ENCODE measurements at regions of chr11 and their contacts with region 1.

Region 1: DNA sequence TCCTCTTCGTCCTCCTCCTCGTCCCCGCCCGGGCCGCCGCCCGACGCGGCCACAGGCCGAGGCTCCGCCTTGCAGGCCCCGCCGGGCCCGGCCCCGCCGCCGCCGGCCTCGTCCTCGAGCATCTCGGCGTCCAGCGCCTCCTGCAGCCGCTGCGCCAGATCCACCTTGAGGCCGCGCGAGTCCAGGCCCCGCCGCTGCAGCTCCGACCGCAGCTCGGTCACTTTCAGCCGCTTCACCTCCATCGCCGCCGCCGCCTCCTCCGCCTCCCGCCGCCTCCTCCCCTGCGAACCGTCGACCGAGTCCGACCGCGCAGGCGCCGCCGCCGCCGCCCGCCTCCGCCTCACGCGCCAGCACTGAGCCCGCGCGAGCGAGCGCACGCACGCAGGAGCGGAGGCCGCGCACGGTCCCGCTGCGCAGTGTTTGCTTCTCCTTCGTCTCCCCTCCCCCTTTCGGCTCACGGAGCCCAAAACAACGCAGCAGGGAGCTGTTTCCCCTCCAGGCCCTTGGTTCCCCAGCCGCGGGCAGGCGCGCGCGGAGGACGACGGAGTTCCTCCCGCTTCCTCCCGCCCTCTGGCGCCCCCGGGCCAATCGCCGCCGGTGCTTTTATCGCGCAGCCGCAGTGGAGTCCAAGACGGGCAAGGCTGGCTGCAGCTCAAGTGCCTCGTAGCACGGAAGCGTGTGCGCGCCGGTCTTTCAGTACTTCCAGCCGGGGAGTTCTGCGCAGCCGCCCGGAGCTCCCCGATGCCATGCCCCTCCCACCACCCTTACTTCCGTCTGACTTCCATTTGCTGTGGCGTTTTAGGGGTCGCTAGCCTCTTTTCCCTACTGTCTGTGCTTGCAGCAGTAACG is at the start of gene HNRNPUL2:
- DNase-seq: peak; percentile 81
- H3K4me3 ChIP-seq: peak within 1 kb of the TSS; percentile 72 to 93 (median 77)
- H3K27ac ChIP-seq: peak within 1 kb of the TSS; percentile 92 to 99 (median 94)
- H3K4me1 ChIP-seq: peaks cover 28 to 67% (median 29%) of the 10 kb centered on the region in 3 donors
- H3K27me3 ChIP-seq: no peaks in the 10 kb centered on the region
- CTCF ChIP-seq: peak in 3 of 6 experiments; percentile 2 to 13 (median 8)
- POLR2A ChIP-seq: peak in 3 of 4 donors; percentile 85 to 97 (median 90)
- total RNA-seq, gene HNRNPUL2: 14.4 to 33.0 (median 26.4) TPM

Region 2: DNA sequence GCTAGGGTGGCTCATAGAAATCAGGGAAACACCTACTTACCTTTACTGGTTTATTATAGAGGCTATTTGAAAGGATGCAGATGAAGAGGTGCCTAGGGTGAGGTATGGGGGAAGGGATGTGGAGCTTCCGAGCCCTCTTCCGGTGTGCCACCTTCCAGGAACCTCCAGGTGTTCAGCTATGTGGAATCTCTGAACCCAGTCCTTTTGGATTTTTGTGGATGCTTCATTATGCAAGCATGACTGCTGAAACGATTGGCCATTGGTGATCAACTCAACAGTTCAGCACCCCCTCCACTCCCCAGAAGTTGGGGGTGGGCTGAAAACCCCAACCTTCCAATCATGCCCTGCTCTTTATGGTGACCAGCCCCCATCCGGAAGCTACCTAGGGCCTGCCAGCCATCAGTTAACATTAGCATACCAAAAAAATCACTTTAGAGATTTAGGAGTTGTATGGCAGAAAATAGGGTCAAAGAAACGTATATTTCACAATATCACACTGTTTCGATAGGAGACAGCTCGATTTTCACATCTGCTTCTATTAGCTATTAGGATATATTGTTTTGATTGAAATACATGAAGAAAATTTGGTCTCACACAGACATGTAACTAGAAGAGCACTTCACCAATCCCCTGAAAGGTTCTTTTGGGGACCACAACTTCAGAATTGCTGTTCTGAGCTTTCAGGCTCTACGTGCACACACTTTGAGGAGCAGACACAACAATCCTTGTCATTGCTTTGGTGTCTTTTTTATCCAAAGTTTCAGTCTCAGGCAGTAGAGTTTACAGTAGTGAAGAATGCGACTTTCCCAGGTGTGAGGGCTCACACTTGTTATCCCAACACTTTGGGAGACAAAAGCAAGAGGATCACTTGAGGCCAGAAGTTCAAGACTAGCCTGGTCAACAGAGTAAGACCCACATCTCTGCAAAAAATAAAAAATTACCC is 31.0 kb after region 1 on chr11:
- intact Hi-C with region 1: loop called (anchors 5 kb)
- DNase-seq: no peak
- H3K4me3 ChIP-seq: no peak overlapping the region
- H3K27ac ChIP-seq: no peak overlapping the region
- H3K4me1 ChIP-seq: peaks cover 21 to 34% (median 22%) of the 10 kb centered on the region in 3 donors
- H3K27me3 ChIP-seq: no peaks in the 10 kb centered on the region
- CTCF ChIP-seq: no peak
- POLR2A ChIP-seq: no peak

Region 3: GRCh38 chr11:62771144-62772021 is 44.2 kb after region 1 on chr11 and contains the start of gene TAF6L:
- intact Hi-C with region 1: no loop called
- DNase-seq: peak; percentile 90
- H3K4me3 ChIP-seq: peak within 1 kb of the TSS; percentile 60 to 92 (median 68)
- H3K27ac ChIP-seq: peak within 1 kb of the TSS; percentile 91 to 99 (median 97)
- H3K4me1 ChIP-seq: peaks cover 9 to 54% (median 17%) of the 10 kb centered on the region in 3 donors
- H3K27me3 ChIP-seq: no peaks in the 10 kb centered on the region
- CTCF ChIP-seq: peak in 1 of 6 experiments; percentile 0
- POLR2A ChIP-seq: peak in 1 of 4 donors; percentile 7
- total RNA-seq, gene TAF6L: 11.5 to 40.2 (median 19.0) TPM

Region 4: GRCh38 chr11:62860835-62861563 is 133.9 kb after region 1 on chr11:
- intact Hi-C with region 1: loop called (anchors 10 kb)
- DNase-seq: no peak
- H3K4me3 ChIP-seq: no peak overlapping the region
- H3K27ac ChIP-seq: peak overlapping the region in 2 of 4 donors; percentile 75 to 76
- H3K4me1 ChIP-seq: peaks cover 14 to 72% (median 28%) of the 10 kb centered on the region in 3 donors
- H3K27me3 ChIP-seq: no peaks in the 10 kb centered on the region
- CTCF ChIP-seq: no peak
- POLR2A ChIP-seq: no peak

Measured in esophagus squamous epithelium (tissue), 5 donors.